ENCODE measurements at regions of chr11 and their contacts with region 1.

Region 1: GRCh38 chr11:34916015-34916842 is at the starts of genes APIP and PDHX:
- DNase-seq: peak; percentile 94
- ATAC-seq: peak; percentile 93
- H3K4me3 ChIP-seq: peak within 1 kb of the TSS; percentile 64 to 95 (median 85)
- H3K4me3 Mint-ChIP-seq: peak within 1 kb of the TSS; percentile 99
- H3K27ac ChIP-seq: peak within 1 kb of the TSS; percentile 84 to 85
- H3K27ac Mint-ChIP-seq: peak within 1 kb of the TSS; percentile 97
- H3K4me1 ChIP-seq: peaks cover 10 to 18% of the 10 kb centered on the region in 2 donors
- H3K4me1 Mint-ChIP-seq: peaks cover 33% of the 10 kb centered on the region
- H3K27me3 ChIP-seq: no peaks in the 10 kb centered on the region
- H3K27me3 Mint-ChIP-seq: no peaks in the 10 kb centered on the region
- CTCF ChIP-seq: no peak
- total RNA-seq, gene APIP: 18.5 and 19.4 TPM in 2 replicates
- total RNA-seq, gene PDHX: 25.8 and 35.4 TPM in 2 replicates

Region 2: GRCh38 chr11:33039274-33040032 is 1876.8 kb before region 1 on chr11 and contains the start of gene TCP11L1:
- CTCF ChIA-PET with region 1: no interaction called
- POLR2A ChIA-PET with region 1: no interaction called
- intact Hi-C with region 1: loop called (anchors 5 kb)
- DNase-seq: peak; percentile 90
- ATAC-seq: peak; percentile 84
- H3K4me3 ChIP-seq: peak within 1 kb of the TSS; percentile 77 to 99 (median 95)
- H3K4me3 Mint-ChIP-seq: peak within 1 kb of the TSS; percentile 96
- H3K27ac ChIP-seq: peak within 1 kb of the TSS; percentile 79 to 88
- H3K27ac Mint-ChIP-seq: peak within 1 kb of the TSS; percentile 94
- H3K4me1 ChIP-seq: peaks cover 8 to 18% of the 10 kb centered on the region in 2 donors
- H3K4me1 Mint-ChIP-seq: peaks cover 16% of the 10 kb centered on the region
- H3K27me3 ChIP-seq: no peaks in the 10 kb centered on the region
- H3K27me3 Mint-ChIP-seq: peaks cover 8% of the 10 kb centered on the region
- CTCF ChIP-seq: no peak
- total RNA-seq, gene TCP11L1: 19.7 and 19.8 TPM in 2 replicates

Region 3: GRCh38 chr11:34234086-34234740 is 682.0 kb before region 1 on chr11:
- CTCF ChIA-PET with region 1: no interaction called
- POLR2A ChIA-PET with region 1: no interaction called
- intact Hi-C with region 1: loop called (anchors 5 kb)
- DNase-seq: peak; percentile 87
- ATAC-seq: peak; percentile 93
- H3K4me3 ChIP-seq: no peak overlapping the region
- H3K4me3 Mint-ChIP-seq: peak overlapping the region; percentile 69
- H3K27ac ChIP-seq: peak overlapping the region; percentile 50 to 64
- H3K27ac Mint-ChIP-seq: peak overlapping the region; percentile 84
- H3K4me1 ChIP-seq: peaks cover 15 to 23% of the 10 kb centered on the region in 2 donors
- H3K4me1 Mint-ChIP-seq: peaks cover 41% of the 10 kb centered on the region
- H3K27me3 ChIP-seq: no peaks in the 10 kb centered on the region
- H3K27me3 Mint-ChIP-seq: no peaks in the 10 kb centered on the region
- CTCF ChIP-seq: no peak

Region 4: DNA sequence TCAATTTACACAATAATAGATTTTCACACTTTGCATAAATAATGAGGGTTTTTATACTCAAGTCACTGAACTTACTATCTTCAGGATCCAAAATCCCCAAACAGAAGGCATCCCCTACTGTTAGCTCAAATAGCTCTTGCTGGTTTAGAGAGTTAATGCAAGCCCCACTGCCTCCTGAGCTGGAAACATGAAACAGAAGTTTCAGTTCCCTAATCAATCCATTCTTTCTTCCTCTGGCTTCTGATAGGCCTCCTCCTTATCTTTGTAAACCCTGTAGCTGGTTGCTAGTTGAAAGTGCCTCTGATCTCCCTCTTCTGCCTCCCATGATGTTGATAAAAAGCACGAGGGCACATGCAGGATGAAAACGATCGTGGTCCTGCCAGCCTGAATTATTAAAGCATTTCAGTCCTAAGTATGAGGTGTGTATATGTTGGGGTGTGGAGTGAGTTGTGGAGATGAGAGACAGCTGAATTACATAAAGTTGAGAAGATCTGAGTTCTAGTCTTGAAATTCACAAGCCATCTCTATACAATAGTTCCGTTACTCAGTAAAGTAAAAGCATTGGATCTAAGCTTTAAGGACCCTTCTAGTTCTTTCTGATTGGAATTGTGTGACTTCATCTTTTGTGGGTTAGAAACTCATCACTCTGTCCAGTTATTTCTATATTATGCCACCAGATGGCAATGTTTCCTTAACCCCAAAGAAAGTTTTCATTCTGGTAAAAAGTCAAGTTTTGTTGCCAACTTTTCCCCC is 330.3 kb before region 1 on chr11:
- CTCF ChIA-PET with region 1: interaction called, 19 read pairs
- POLR2A ChIA-PET with region 1: no interaction called
- intact Hi-C with region 1: no loop called
- DNase-seq: peak; percentile 74
- ATAC-seq: peak; percentile 94
- H3K4me3 ChIP-seq: no peak overlapping the region
- H3K4me3 Mint-ChIP-seq: peak overlapping the region; percentile 33
- H3K27ac ChIP-seq: peak overlapping the region; percentile 43
- H3K27ac Mint-ChIP-seq: peak overlapping the region; percentile 48
- H3K4me1 ChIP-seq: peaks cover 12 to 16% of the 10 kb centered on the region in 2 donors
- H3K4me1 Mint-ChIP-seq: peaks cover 23% of the 10 kb centered on the region
- H3K27me3 ChIP-seq: no peaks in the 10 kb centered on the region
- H3K27me3 Mint-ChIP-seq: no peaks in the 10 kb centered on the region
- CTCF ChIP-seq: peak; percentile 77

Region 5: GRCh38 chr11:34972892-34973291 is 56.7 kb after region 1 on chr11:
- CTCF ChIA-PET with region 1: no interaction called
- POLR2A ChIA-PET with region 1: no interaction called
- intact Hi-C with region 1: no loop called
- DNase-seq: no peak
- ATAC-seq: no peak
- H3K4me3 ChIP-seq: no peak overlapping the region
- H3K4me3 Mint-ChIP-seq: no peak overlapping the region
- H3K27ac ChIP-seq: no peak overlapping the region
- H3K27ac Mint-ChIP-seq: no peak overlapping the region
- H3K4me1 ChIP-seq: no peaks in the 10 kb centered on the region
- H3K4me1 Mint-ChIP-seq: no peaks in the 10 kb centered on the region
- H3K27me3 ChIP-seq: no peaks in the 10 kb centered on the region
- H3K27me3 Mint-ChIP-seq: no peaks in the 10 kb centered on the region
- CTCF ChIP-seq: no peak

Region 6: GRCh38 chr11:35005141-35005780 is 89.0 kb after region 1 on chr11:
- CTCF ChIA-PET with region 1: no interaction called
- POLR2A ChIA-PET with region 1: no interaction called
- intact Hi-C with region 1: no loop called
- DNase-seq: no peak
- ATAC-seq: no peak
- H3K4me3 ChIP-seq: no peak overlapping the region
- H3K4me3 Mint-ChIP-seq: no peak overlapping the region
- H3K27ac ChIP-seq: no peak overlapping the region
- H3K27ac Mint-ChIP-seq: no peak overlapping the region
- H3K4me1 ChIP-seq: peaks cover 6 to 10% of the 10 kb centered on the region in 2 donors
- H3K4me1 Mint-ChIP-seq: peaks cover 34% of the 10 kb centered on the region
- H3K27me3 ChIP-seq: no peaks in the 10 kb centered on the region
- H3K27me3 Mint-ChIP-seq: no peaks in the 10 kb centered on the region
- CTCF ChIP-seq: no peak

Region 7: DNA sequence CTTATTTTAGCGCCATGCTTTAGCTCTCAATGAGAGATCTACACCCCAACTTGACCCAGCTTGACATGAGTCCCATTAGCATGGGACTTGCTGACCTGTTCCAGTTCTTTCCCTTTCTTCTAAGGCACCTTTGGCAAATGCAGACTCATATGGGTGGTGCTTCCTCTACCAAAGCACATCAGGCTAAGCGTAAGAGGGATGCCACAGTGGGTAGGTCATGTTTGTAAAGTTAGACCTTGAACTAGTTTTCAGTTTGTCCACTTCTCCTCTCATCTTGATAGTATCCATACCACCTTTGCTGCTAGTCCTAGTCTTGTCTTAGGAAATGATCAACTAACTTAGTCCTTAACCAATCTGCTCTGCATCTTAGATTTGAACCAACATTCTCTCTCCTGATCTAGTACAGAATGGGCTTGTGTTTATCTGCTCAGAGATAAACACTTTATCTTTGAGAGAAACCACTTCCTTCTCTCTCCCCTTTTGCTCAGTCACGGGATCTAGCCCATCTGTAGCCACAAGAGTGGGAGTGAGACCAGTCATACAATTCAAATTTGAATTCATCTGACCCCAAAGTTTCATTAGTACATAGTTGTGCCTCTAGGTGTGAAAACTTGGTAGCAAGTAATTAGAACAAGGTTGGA is 150.7 kb after region 1 on chr11:
- CTCF ChIA-PET with region 1: no interaction called
- POLR2A ChIA-PET with region 1: no interaction called
- intact Hi-C with region 1: no loop called
- DNase-seq: peak; percentile 72
- ATAC-seq: peak; percentile 69
- H3K4me3 ChIP-seq: peak overlapping the region in 1 of 5 experiments; percentile 21
- H3K4me3 Mint-ChIP-seq: peak overlapping the region; percentile 64
- H3K27ac ChIP-seq: no peak overlapping the region
- H3K27ac Mint-ChIP-seq: peak overlapping the region; percentile 61
- H3K4me1 ChIP-seq: peaks cover 26 to 34% of the 10 kb centered on the region in 2 donors
- H3K4me1 Mint-ChIP-seq: peaks cover 39% of the 10 kb centered on the region
- H3K27me3 ChIP-seq: no peaks in the 10 kb centered on the region
- H3K27me3 Mint-ChIP-seq: no peaks in the 10 kb centered on the region
- CTCF ChIP-seq: no peak

Region 8: GRCh38 chr11:35144136-35144741 is 228.0 kb after region 1 on chr11:
- CTCF ChIA-PET with region 1: no interaction called
- POLR2A ChIA-PET with region 1: no interaction called
- intact Hi-C with region 1: loop called (anchors 5 kb)
- DNase-seq: peak; percentile 90
- ATAC-seq: peak; percentile 60
- H3K4me3 ChIP-seq: peak overlapping the region; percentile 1 to 89 (median 26)
- H3K4me3 Mint-ChIP-seq: peak overlapping the region; percentile 78
- H3K27ac ChIP-seq: peak overlapping the region; percentile 79 to 87
- H3K27ac Mint-ChIP-seq: peak overlapping the region; percentile 83
- H3K4me1 ChIP-seq: peaks cover 80 to 90% of the 10 kb centered on the region in 2 donors
- H3K4me1 Mint-ChIP-seq: peaks cover 80% of the 10 kb centered on the region
- H3K27me3 ChIP-seq: no peaks in the 10 kb centered on the region
- H3K27me3 Mint-ChIP-seq: no peaks in the 10 kb centered on the region
- CTCF ChIP-seq: peak; percentile 23

Region 9: DNA sequence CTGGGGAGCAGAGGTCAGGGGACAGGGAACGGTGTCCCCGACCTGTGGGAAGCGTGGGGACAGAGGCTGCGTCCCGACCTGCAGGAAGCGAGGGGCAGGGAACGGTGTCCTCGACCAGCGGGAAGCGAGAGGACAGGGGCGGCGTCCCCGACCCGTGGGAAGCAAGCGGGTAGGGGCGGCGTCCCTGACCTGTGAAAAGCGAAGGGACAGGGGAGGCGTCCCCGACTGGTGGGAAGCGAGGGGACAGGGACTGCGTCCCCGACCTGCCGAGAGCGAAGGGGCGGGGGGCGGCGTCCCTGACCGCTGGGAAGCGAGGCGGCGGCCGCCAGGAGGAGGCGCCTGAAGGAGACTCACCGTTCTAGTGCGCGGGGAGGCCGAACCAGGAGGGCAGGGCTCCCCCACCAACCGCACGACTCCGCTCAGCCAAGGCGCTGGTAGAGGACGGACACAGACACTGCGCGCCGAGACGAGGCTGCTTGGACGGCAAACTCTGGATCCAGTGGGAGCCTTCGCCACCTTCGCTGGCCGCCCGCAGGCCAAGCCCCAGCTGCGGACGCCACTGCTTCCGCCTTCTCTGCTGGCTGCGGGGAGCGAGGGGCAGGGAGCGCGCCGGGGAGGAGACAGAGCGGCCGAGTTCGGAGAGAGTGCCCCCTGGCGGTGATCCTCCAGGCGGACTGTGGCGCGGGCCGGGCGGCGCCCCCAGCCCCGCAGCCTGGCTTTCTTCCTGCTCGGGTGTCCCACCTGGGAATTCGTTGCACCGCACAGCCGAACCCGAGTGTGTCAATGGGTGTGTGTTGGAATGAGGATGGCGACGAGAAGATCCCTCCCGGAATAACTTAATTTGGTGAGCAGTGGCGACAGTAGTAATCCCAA is 1593.7 kb after region 1 on chr11 and contains the start of gene TRAF6:
- CTCF ChIA-PET with region 1: no interaction called
- POLR2A ChIA-PET with region 1: no interaction called
- intact Hi-C with region 1: loop called (anchors 10 kb)
- DNase-seq: peak; percentile 92
- ATAC-seq: peak; percentile 94
- H3K4me3 ChIP-seq: peak within 1 kb of the TSS; percentile 73 to 95 (median 92)
- H3K4me3 Mint-ChIP-seq: peak within 1 kb of the TSS; percentile 96
- H3K27ac ChIP-seq: peak within 1 kb of the TSS; percentile 72 to 86
- H3K27ac Mint-ChIP-seq: peak within 1 kb of the TSS; percentile 97
- H3K4me1 ChIP-seq: peaks cover 16 to 17% of the 10 kb centered on the region in 2 donors
- H3K4me1 Mint-ChIP-seq: peaks cover 27% of the 10 kb centered on the region
- H3K27me3 ChIP-seq: peaks cover 0 to 2% (median 0%) of the 10 kb centered on the region in 4 experiments
- H3K27me3 Mint-ChIP-seq: peaks cover 16% of the 10 kb centered on the region
- CTCF ChIP-seq: peak; percentile 91
- total RNA-seq, gene TRAF6: 20.2 and 22.4 TPM in 2 replicates